Ascending aorta (tissue), 2 donors: ENCODE measurements at regions of chr19 and their contacts with region 1.

Region 1: GRCh38 chr19:53431399-53432087 is at the start of gene ZNF761:
- DNase-seq: peak; percentile 73 to 97
- H3K4me3 ChIP-seq: peak within 1 kb of the TSS; percentile 66 to 96
- H3K27ac ChIP-seq: peak within 1 kb of the TSS; percentile 67 to 77
- H3K4me1 ChIP-seq: no peaks in the 10 kb centered on the region
- H3K27me3 ChIP-seq: no peaks in the 10 kb centered on the region
- CTCF ChIP-seq: peak in 2 of 3 experiments; percentile 34 to 50
- total RNA-seq, gene ZNF761: 1.4 TPM

Region 2: GRCh38 chr19:53333463-53334449 is 97.8 kb before region 1 on chr19 and contains the start of gene ZNF845:
- intact Hi-C with region 1: loop called (anchors 1 kb)
- DNase-seq: peak; percentile 75 to 98
- H3K4me3 ChIP-seq: peak within 1 kb of the TSS; percentile 66 to 73
- H3K27ac ChIP-seq: peak within 1 kb of the TSS; percentile 77 to 82
- H3K4me1 ChIP-seq: peaks cover 0 to 4% of the 10 kb centered on the region in 2 donors
- H3K27me3 ChIP-seq: no peaks in the 10 kb centered on the region
- CTCF ChIP-seq: no peak
- total RNA-seq, gene ZNF845: 3.1 TPM

Region 3: DNA sequence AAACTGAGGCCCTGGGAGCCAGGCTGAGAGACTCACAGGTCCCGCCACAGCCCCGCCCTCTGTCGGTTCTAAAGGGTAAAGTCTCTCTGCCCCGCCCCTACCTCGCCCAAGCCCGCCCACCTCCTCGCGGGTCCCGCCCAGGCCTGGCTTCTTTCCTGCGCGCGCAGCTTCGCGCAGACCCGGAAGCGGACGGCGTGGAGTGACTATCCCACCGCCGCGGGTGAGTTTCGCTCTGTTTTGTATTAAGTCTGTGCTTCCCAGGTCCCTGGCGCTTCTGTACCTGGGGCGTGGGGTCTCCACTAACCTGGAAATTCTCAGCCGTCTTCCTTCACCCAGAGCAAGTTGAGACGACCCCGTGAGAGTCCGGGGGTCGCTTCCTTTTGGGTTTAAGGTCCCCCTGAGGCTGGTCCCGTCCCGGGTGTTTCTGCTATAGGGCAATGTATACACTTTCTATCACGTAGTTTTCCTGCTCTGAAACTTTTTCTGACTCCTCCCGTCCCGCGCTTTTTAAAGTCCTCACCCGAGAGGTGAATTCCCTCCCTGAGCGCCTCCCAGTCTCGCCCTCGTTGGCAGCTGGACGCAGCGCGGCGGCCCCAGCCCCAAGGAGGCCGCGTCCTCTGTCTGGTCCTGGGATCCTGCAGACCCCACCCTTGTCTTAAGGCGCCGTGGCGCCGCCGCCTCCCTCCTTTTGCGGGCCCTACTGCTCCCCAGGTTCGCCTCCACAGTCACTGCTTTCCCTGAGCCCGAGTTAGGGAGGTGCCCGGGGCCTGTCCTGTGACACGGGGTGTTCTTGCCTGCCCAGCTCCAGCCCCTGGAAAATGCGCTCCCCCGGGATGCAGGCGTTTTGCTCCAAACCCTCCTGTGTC is 36.3 kb before region 1 on chr19 and contains the start of gene ZNF765:
- intact Hi-C with region 1: loop called (anchors 1 kb)
- DNase-seq: peak; percentile 82 to 97
- H3K4me3 ChIP-seq: peak within 1 kb of the TSS; percentile 65 to 68
- H3K27ac ChIP-seq: peak within 1 kb of the TSS; percentile 80 to 83
- H3K4me1 ChIP-seq: peaks cover 0 to 13% of the 10 kb centered on the region in 2 donors
- H3K27me3 ChIP-seq: no peaks in the 10 kb centered on the region
- CTCF ChIP-seq: peak; percentile 47 to 58 (median 55)
- total RNA-seq, gene ZNF765: 3.5 TPM

Region 4: GRCh38 chr19:53467485-53468262 is 36.1 kb after region 1 on chr19 and contains the start of gene ZNF813:
- intact Hi-C with region 1: loop called (anchors 2 kb)
- DNase-seq: peak; percentile 76 to 97
- H3K4me3 ChIP-seq: peak within 1 kb of the TSS; percentile 78 to 84
- H3K27ac ChIP-seq: peak within 1 kb of the TSS; percentile 50 to 56
- H3K4me1 ChIP-seq: peaks cover 0 to 11% of the 10 kb centered on the region in 2 donors
- H3K27me3 ChIP-seq: no peaks in the 10 kb centered on the region
- CTCF ChIP-seq: no peak
- total RNA-seq, gene ZNF813: 1.3 TPM

Region 5: DNA sequence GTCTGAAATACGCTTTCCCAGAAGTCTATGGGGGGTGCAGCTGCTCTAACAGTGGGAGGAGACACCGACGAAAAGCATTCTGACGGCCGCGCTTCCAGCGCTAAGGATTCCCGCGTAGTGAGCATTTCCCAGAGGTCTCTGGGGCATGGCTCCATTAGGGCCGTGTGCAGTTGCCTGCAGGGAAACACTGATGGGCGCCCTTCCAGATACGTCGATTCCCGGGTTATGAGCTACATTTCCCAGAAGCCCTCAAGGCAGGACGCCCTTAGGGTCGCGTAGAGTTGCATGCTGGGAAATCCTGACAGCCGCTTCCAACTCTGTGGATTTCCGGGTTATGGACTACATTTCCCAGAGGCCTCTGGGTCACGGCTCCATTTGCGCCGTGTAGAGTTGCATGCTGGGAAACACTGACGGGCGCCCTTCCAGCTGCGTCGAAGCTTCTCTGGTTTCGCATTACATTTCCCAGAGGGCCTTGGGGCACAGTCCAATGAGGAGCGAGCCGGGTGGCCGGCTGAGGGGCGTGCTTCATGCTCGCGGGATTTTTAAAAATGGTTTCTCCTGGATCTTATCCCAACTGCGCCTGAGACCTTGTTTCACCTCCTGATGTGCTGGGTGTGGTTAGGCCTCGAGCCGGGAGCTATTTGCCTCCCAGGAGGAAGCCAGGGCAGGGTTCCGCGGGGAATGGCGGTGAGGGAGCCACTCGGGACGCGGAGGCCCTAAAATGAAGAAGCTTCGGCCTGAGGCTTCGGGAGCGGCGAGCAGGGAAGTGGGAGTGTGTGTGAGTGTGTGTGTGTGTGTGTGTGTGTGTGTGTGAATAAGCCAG is 89.2 kb after region 1 on chr19:
- intact Hi-C with region 1: loop called (anchors 2 kb)
- DNase-seq: peak; percentile 90 to 98
- H3K4me3 ChIP-seq: peak overlapping the region; percentile 51 to 66
- H3K27ac ChIP-seq: peak overlapping the region; percentile 62 to 75
- H3K4me1 ChIP-seq: peaks cover 0 to 5% of the 10 kb centered on the region in 2 donors
- H3K27me3 ChIP-seq: no peaks in the 10 kb centered on the region
- CTCF ChIP-seq: no peak